Dendritic cell treated with granulocyte-macrophage colony-stimulating factor and Interleukin-4, amounts not matched to agents 40 ng/mL and 50 ng/mL, for 4 days (primary cell): ENCODE measurements at regions of chr22 and their contacts with region 1.

Region 1: DNA sequence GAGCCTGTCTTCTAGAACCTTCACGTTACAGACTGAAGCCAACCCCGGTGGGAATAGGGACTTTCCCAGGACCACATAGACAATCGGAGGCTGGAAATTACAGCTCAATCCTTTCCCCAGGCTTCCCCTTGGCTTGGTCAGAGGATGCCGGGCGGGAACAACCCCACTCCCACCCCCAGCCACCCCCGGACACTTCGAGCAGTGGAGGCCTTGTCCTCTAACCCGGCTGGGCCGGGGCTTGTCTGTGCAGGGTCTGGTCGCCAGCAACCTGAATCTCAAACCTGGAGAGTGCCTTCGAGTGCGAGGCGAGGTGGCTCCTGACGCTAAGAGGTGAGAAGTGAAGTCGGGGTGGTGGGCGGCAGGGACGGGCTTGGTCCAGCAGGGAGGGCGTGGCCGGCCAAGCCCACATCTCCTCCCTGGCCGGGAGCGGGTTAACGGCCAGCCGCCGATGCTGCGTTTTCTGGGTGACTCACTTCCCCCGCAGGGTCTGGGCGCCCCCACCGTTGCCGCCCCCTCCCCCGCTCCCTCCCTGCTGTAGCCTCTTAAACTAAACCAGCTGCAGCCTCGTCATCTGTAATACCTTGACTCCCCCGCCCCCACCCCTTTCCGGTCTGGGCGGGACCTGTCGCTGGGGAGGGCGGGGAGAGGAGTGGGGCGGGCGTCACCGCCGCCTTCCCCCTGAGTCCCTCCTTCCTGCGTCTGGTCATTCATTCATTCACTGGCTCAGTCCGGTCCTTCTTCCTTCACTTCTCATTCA is 1.5 kb downstream of the LGALS1 start:
- H3K4me3 Mint-ChIP-seq: peak overlapping the region; percentile 96
- H3K27ac Mint-ChIP-seq: peak overlapping the region; percentile 91
- H3K4me1 Mint-ChIP-seq: peaks cover 67% of the 10 kb centered on the region
- H3K27me3 Mint-ChIP-seq: no peaks in the 10 kb centered on the region

Region 2: GRCh38 chr22:37428649-37429586 is 248.0 kb before region 1 on chr22:
- intact Hi-C with region 1: no loop called
- H3K4me3 Mint-ChIP-seq: no peak overlapping the region
- H3K27ac Mint-ChIP-seq: no peak overlapping the region
- H3K4me1 Mint-ChIP-seq: peaks cover 36% of the 10 kb centered on the region
- H3K27me3 Mint-ChIP-seq: peaks cover 77% of the 10 kb centered on the region

Region 3: GRCh38 chr22:37623075-37624016 is 53.6 kb before region 1 on chr22:
- intact Hi-C with region 1: loop called (anchors 5 kb)
- H3K4me3 Mint-ChIP-seq: no peak overlapping the region
- H3K27ac Mint-ChIP-seq: peak overlapping the region; percentile 44
- H3K4me1 Mint-ChIP-seq: peaks cover 48% of the 10 kb centered on the region
- H3K27me3 Mint-ChIP-seq: no peaks in the 10 kb centered on the region

Region 4: DNA sequence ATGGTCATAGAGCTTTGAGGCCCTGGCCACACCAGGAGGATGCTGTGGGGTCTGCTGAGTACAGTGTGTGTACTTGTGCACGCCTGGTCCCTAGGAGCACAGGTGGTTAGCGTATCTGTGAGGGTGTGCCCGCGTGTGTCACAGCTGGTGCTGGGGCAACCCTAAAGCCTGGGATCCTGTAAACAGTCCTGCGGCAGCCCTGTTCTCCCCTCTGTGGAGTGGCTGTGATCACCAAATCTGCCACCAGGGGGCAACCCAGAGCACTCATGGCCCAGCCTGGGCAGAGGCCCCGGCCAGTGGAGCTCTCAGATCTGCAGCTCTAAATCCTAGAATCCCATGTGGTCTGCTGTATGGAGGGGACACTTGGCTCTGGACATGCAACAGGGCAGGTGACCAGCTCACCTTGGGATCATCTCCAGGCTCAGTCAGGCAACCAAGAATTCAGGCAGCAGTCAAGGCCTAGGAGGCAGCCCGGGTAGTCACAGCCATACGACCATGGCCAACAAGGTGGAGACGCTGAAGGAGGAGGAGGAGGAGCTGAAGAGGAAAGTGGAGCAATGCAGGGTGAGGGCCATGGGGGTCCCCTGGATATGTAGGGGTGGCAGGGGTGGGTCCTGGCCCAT is 33.6 kb before region 1 on chr22:
- intact Hi-C with region 1: loop called (anchors 5 kb)
- H3K4me3 Mint-ChIP-seq: peak overlapping the region; percentile 40
- H3K27ac Mint-ChIP-seq: peak overlapping the region; percentile 71
- H3K4me1 Mint-ChIP-seq: peaks cover 55% of the 10 kb centered on the region
- H3K27me3 Mint-ChIP-seq: no peaks in the 10 kb centered on the region

Region 5: DNA sequence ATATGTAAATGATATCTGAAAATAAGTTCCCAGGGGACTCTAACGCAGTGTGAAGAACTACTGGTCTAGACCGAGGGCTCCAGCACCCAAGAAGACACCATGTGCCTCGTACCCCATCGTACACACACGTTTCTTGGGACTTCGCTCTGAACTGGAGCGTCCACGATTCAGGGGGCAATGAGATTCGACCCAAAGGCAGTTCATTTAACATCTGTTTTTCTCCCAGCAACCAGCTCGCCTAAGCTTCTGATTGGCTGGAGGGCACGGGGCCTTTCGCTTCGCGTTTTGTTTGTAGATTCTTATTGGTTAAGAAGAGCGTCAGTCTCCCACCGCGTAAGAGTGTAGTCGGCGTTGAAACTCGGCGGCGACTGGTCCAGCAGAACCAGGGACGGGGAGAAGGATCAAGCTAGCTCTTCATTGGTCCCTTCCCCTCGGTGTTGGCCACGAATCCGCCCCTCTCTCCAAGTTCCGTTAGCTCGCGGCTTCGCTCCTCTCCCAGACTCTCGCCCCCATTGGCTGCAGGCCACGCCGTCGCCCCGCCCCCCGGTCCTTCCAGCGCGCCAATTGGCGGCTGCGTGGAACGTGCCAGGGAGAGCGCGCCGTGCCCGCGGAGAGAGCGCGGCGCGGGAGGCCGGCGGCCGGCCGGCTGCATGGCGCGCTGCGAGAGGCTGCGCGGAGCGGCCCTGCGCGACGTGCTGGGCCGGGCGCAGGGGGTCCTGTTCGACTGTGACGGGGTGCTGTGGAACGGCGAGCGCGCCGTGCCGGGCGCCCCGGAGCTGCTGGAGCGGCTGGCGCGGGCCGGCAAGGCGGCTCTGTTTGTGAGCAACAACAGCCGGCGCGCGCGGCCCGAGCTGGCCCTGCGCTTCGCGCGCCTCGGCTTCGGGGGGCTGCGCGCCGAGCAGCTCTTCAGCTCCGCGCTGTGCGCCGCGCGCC is 18.5 kb before region 1 on chr22 and contains the start of gene PDXP:
- intact Hi-C with region 1: loop called (anchors 1 kb)
- H3K4me3 Mint-ChIP-seq: peak within 1 kb of the TSS; percentile 84
- H3K27ac Mint-ChIP-seq: peak within 1 kb of the TSS; percentile 86
- H3K4me1 Mint-ChIP-seq: peaks cover 56% of the 10 kb centered on the region
- H3K27me3 Mint-ChIP-seq: no peaks in the 10 kb centered on the region